ENCODE measurements at regions of chr16 and their contacts with region 1.

Region 1: GRCh38 chr16:66562407-66562806 is 3.8 kb upstream of the CMTM1 start:
- DNase-seq: peak in 2 of 9 experiments; percentile 34 to 56
- ATAC-seq: peak; percentile 64
- H3K4me3 ChIP-seq: no peak overlapping the region
- H3K4me3 Mint-ChIP-seq: no peak overlapping the region
- H3K27ac ChIP-seq: peak overlapping the region in 1 of 2 experiments; percentile 58
- H3K27ac Mint-ChIP-seq: peak overlapping the region; percentile 49
- H3K4me1 ChIP-seq: peaks cover 9% of the 10 kb centered on the region
- H3K4me1 Mint-ChIP-seq: peaks cover 60% of the 10 kb centered on the region
- H3K27me3 ChIP-seq: no peaks in the 10 kb centered on the region
- H3K27me3 Mint-ChIP-seq: no peaks in the 10 kb centered on the region
- CTCF ChIP-seq: peak; percentile 61

Region 2: DNA sequence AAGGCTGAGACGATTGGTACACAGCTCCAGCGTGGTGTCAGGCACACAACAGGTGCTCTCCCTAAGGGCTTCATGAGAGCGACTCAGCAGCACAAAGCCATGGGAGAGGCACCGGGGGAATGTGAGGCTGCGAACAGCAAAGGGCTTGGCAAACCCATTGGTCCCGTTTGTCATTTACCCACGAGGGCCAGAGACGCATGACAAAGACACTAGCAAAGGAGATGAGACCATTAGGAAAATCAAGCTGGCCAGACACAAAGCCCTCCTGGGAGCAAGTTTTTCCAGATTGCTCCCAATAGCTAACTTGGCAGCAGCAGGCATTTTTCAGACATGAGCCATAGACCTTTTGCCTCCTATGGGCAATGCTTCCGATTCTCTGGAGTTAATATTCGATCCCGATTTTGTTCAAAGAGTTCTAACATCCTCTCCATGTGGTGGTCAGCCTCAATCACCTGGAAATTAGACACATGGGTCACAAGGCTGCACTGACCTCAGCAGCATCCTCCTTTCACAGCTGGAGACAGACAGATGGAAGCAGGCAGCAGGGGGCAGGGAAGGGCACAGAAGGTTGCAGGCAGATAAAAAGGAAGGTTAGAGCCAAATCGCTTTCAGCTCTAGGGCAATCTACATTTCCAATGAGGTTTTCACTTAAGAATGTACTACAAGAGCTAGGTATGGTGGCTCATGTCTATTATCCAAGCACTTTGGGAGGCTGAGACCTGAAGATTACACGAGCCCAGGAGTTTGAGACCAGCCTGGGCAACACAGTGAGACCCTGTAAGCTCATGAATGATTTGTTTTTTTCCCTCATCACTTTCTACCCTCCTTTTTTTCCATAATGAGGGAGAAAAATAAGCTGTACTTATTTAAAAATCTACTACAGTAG is 50.5 kb before region 1 on chr16:
- CTCF ChIA-PET with region 1: interaction called, 19 read pairs
- POLR2A ChIA-PET with region 1: no interaction called
- intact Hi-C with region 1: no loop called
- DNase-seq: peak in 2 of 9 experiments; percentile 27 to 33
- ATAC-seq: no peak
- H3K4me3 ChIP-seq: no peak overlapping the region
- H3K4me3 Mint-ChIP-seq: no peak overlapping the region
- H3K27ac ChIP-seq: no peak overlapping the region
- H3K27ac Mint-ChIP-seq: no peak overlapping the region
- H3K4me1 ChIP-seq: peaks cover 19% of the 10 kb centered on the region
- H3K4me1 Mint-ChIP-seq: peaks cover 27% of the 10 kb centered on the region
- H3K27me3 ChIP-seq: no peaks in the 10 kb centered on the region
- H3K27me3 Mint-ChIP-seq: no peaks in the 10 kb centered on the region
- CTCF ChIP-seq: no peak

Region 3: GRCh38 chr16:66580605-66581209 is 18.3 kb after region 1 on chr16:
- CTCF ChIA-PET with region 1: interaction called, 22 read pairs
- POLR2A ChIA-PET with region 1: interaction called, 3 read pairs
- intact Hi-C with region 1: no loop called
- DNase-seq: peak in 1 of 9 experiments; percentile 9
- ATAC-seq: no peak
- H3K4me3 ChIP-seq: no peak overlapping the region
- H3K4me3 Mint-ChIP-seq: no peak overlapping the region
- H3K27ac ChIP-seq: no peak overlapping the region
- H3K27ac Mint-ChIP-seq: no peak overlapping the region
- H3K4me1 ChIP-seq: peaks cover 12% of the 10 kb centered on the region
- H3K4me1 Mint-ChIP-seq: peaks cover 14% of the 10 kb centered on the region
- H3K27me3 ChIP-seq: peaks cover 0 to 10% of the 10 kb centered on the region in 2 experiments
- H3K27me3 Mint-ChIP-seq: peaks cover 20% of the 10 kb centered on the region
- CTCF ChIP-seq: no peak

Region 4: GRCh38 chr16:66596986-66597848 is 34.8 kb after region 1 on chr16:
- CTCF ChIA-PET with region 1: interaction called, 12 read pairs
- POLR2A ChIA-PET with region 1: no interaction called
- intact Hi-C with region 1: no loop called
- DNase-seq: no peak
- ATAC-seq: no peak
- H3K4me3 ChIP-seq: no peak overlapping the region
- H3K4me3 Mint-ChIP-seq: no peak overlapping the region
- H3K27ac ChIP-seq: no peak overlapping the region
- H3K27ac Mint-ChIP-seq: peak overlapping the region; percentile 4
- H3K4me1 ChIP-seq: peaks cover 24% of the 10 kb centered on the region
- H3K4me1 Mint-ChIP-seq: peaks cover 31% of the 10 kb centered on the region
- H3K27me3 ChIP-seq: no peaks in the 10 kb centered on the region
- H3K27me3 Mint-ChIP-seq: no peaks in the 10 kb centered on the region
- CTCF ChIP-seq: no peak

Region 5: GRCh38 chr16:66740010-66740409 is 177.6 kb after region 1 on chr16:
- CTCF ChIA-PET with region 1: interaction called, 12 read pairs
- POLR2A ChIA-PET with region 1: no interaction called
- intact Hi-C with region 1: loop called (anchors 2 to 5 kb)
- DNase-seq: peak in 4 of 9 experiments; percentile 27 to 63 (median 44)
- ATAC-seq: peak; percentile 79
- H3K4me3 ChIP-seq: no peak overlapping the region
- H3K4me3 Mint-ChIP-seq: no peak overlapping the region
- H3K27ac ChIP-seq: no peak overlapping the region
- H3K27ac Mint-ChIP-seq: no peak overlapping the region
- H3K4me1 ChIP-seq: no peaks in the 10 kb centered on the region
- H3K4me1 Mint-ChIP-seq: peaks cover 24% of the 10 kb centered on the region
- H3K27me3 ChIP-seq: no peaks in the 10 kb centered on the region
- H3K27me3 Mint-ChIP-seq: no peaks in the 10 kb centered on the region
- CTCF ChIP-seq: peak; percentile 65